Activated CD4-positive, alpha-beta T cell treated with anti-CD3 and anti-CD28 coated beads for 36 hours (primary cell): ENCODE measurements at regions of chr21 and their contacts with region 1.

Region 1: DNA sequence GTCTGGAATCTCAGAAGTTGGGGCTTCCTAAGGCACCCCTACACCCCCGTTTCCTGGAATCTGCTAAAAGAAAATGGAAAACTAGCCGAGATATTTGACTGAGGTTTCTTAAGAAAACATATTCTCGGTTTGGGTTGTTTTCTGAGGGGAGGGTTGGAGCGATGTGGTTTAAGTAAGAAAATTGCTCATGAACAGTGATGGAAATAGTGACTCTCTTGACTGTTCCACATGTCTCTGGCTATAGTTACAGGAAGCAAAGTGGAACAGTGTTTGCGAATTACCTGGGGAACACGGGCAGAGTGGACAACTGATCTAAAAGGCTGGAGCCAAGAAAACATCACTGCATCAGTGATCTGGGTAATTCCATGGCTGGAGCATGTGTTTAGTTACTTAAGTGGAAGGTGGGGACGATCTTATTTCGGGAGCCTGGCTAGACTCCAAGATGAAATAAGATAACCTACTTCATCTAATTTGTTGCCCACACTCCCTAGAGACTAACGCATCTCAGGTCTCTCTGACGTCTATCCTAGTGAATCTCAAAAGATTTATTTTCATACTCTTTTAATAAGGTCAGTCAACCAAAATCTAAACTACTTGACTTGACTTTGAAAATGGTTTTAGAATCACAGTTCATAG is 92.4 kb downstream of the KCNJ15 start:
- DNase-seq: peak; percentile 41
- ATAC-seq: peak; percentile 78
- H3K4me3 Mint-ChIP-seq: no peak overlapping the region
- H3K27ac Mint-ChIP-seq: peak overlapping the region; percentile 78
- H3K4me1 Mint-ChIP-seq: peaks cover 41% of the 10 kb centered on the region
- H3K27me3 Mint-ChIP-seq: peaks cover 6% of the 10 kb centered on the region

Region 2: DNA sequence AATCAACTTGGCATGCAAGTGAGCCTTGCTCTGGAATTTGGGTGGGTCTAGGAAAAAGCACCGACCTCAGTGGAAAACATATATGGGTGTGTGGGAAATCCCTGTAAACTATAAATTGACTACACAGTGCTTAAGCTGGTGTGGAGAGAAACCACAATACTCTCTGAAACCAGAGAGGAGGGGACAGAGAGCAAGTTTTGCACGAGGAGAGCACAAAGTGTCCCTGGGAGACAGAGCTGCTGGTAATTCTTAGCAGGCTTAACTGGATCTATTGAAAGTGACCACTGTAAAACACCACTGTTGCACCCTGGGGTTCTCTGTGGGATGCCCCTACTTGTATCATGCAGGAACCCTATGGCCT is 79.7 kb before region 1 on chr21:
- CTCF ChIA-PET with region 1: no interaction called
- POLR2A ChIA-PET with region 1: no interaction called
- intact Hi-C with region 1: loop called in 1 of 2 experiments (anchors 2 kb)
- DNase-seq: no peak
- ATAC-seq: peak; percentile 64
- H3K4me3 Mint-ChIP-seq: no peak overlapping the region
- H3K27ac Mint-ChIP-seq: no peak overlapping the region
- H3K4me1 Mint-ChIP-seq: peaks cover 34% of the 10 kb centered on the region
- H3K27me3 Mint-ChIP-seq: no peaks in the 10 kb centered on the region

Region 3: DNA sequence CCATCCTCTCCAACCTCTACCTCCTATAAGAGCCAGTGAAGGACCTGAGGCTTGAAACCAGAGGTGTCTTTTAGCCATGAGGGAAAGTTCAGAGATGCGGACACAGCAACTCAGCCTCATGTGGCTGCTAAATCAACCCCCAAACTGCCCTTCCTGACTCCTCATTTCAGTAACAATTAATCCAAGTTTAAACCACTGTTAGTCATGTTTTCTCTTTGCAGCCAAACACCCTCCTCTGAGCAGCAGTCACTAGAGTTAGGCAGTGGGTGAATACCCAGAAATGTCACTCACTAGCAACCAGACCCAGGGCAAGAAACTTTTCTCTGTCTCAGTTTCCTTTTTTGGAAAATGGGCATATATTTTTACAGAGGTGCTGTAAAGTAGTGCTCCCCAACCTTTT is 21.2 kb before region 1 on chr21:
- CTCF ChIA-PET with region 1: interaction called, 3 read pairs
- POLR2A ChIA-PET with region 1: no interaction called
- intact Hi-C with region 1: loop called in 1 of 2 experiments (anchors 1 kb)
- DNase-seq: peak; percentile 26
- ATAC-seq: peak; percentile 85
- H3K4me3 Mint-ChIP-seq: no peak overlapping the region
- H3K27ac Mint-ChIP-seq: peak overlapping the region; percentile 40
- H3K4me1 Mint-ChIP-seq: peaks cover 23% of the 10 kb centered on the region
- H3K27me3 Mint-ChIP-seq: peaks cover 2% of the 10 kb centered on the region

Region 4: GRCh38 chr21:38380481-38381137 is 31.4 kb after region 1 on chr21:
- CTCF ChIA-PET with region 1: no interaction called
- POLR2A ChIA-PET with region 1: no interaction called
- intact Hi-C with region 1: no loop called
- DNase-seq: no peak
- ATAC-seq: no peak
- H3K4me3 Mint-ChIP-seq: no peak overlapping the region
- H3K27ac Mint-ChIP-seq: no peak overlapping the region
- H3K4me1 Mint-ChIP-seq: peaks cover 4% of the 10 kb centered on the region
- H3K27me3 Mint-ChIP-seq: peaks cover 15% of the 10 kb centered on the region

Region 5: DNA sequence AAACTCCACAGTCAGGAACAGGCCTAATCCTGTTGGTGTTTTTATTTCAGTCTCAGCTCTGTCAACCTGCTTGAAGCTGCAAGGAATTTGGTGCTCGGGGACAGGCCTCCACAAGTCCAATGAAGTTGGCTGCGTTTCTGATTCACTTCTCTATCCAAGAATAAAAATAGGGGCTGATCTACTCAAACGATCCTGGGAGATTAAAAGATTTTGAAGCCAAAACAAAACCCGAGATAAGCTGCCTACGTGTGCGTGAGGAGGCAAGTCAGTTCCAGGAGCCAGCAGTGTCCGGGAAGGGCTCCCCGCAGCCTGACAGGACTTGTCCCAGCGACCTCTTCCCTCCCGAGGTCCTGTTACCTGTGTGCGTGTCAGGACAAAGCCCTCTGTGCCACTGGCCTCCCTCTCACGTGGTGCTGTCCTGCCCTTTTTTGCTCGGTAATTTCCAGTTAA is 554.5 kb after region 1 on chr21:
- CTCF ChIA-PET with region 1: no interaction called
- POLR2A ChIA-PET with region 1: no interaction called
- intact Hi-C with region 1: no loop called
- DNase-seq: no peak
- ATAC-seq: no peak
- H3K4me3 Mint-ChIP-seq: no peak overlapping the region
- H3K27ac Mint-ChIP-seq: no peak overlapping the region
- H3K4me1 Mint-ChIP-seq: peaks cover 17% of the 10 kb centered on the region
- H3K27me3 Mint-ChIP-seq: no peaks in the 10 kb centered on the region